ENCODE measurements at regions of chr6 and their contacts with region 1.

Region 1: DNA sequence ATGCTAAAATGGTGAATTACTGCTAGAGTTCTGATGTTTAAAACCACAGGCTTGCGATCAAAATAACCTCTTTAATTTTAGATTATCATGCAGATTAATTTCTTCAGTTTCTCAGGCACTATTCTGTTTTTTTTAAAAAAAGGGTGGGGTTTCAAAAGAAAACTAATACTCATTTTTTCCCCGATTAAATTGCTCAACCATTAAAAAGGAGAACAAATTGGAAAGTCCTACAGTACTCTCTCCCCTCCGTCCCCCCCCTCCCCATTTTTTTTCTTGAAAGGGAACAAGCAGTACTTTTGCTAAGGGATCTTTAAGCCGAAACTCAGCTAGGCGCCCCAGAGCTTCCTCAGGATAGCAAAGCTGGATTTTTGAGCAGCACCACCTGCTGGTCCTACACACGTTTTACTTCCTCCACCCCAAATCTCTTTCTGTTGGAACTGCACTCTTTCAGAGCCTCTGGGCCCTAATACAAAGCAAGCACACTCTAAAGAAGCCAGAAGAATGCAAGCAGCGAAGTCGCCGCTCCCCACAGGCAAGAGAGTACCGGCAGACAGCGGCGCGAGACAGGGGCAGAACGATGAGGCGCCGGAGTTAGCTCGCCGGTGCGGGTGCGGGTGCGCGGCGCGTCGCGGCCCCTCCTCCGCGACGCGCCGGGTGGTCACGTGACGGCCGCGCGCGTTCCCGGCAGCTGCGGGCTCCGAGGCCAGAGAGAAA is at the start of gene RNF146:
- DNase-seq: peak; percentile 73 to 84
- H3K4me3 ChIP-seq: peak within 1 kb of the TSS; percentile 99
- H3K4me3 Mint-ChIP-seq: peak within 1 kb of the TSS; percentile 94
- H3K27ac Mint-ChIP-seq: peak within 1 kb of the TSS; percentile 95
- H3K4me1 ChIP-seq: 0 out of 2 replicates have a peak, but pooled peaks cover 6% of the 10 kb centered on the region
- H3K4me1 Mint-ChIP-seq: peaks cover 9% of the 10 kb centered on the region
- H3K27me3 ChIP-seq: no peaks in the 10 kb centered on the region
- H3K27me3 Mint-ChIP-seq: no peaks in the 10 kb centered on the region
- CTCF ChIP-seq: peak; percentile 61 to 68
- total RNA-seq, gene RNF146: 31.3 and 35.1 TPM in 2 replicates

Region 2: GRCh38 chr6:125986300-125987025 is 1279.9 kb before region 1 on chr6 and contains the start of gene TRMT11:
- CTCF ChIA-PET with region 1: no interaction called
- POLR2A ChIA-PET with region 1: no interaction called
- intact Hi-C with region 1: loop called (anchors 1 kb)
- DNase-seq: peak; percentile 93 to 94
- H3K4me3 ChIP-seq: peak within 1 kb of the TSS; percentile 67
- H3K4me3 Mint-ChIP-seq: no peak within 1 kb of the TSS
- H3K27ac Mint-ChIP-seq: no peak within 1 kb of the TSS
- H3K4me1 ChIP-seq: peaks cover 27% of the 10 kb centered on the region
- H3K4me1 Mint-ChIP-seq: no peaks in the 10 kb centered on the region
- H3K27me3 ChIP-seq: no peaks in the 10 kb centered on the region
- H3K27me3 Mint-ChIP-seq: no peaks in the 10 kb centered on the region
- CTCF ChIP-seq: no peak
- total RNA-seq, gene TRMT11: 31.5 and 36.7 TPM in 2 replicates

Region 3: GRCh38 chr6:126804332-126805064 is 461.8 kb before region 1 on chr6:
- CTCF ChIA-PET with region 1: no interaction called
- POLR2A ChIA-PET with region 1: no interaction called
- intact Hi-C with region 1: loop called (anchors 10 kb)
- DNase-seq: peak; percentile 36 to 68
- H3K4me3 ChIP-seq: no peak overlapping the region
- H3K4me3 Mint-ChIP-seq: no peak overlapping the region
- H3K27ac Mint-ChIP-seq: no peak overlapping the region
- H3K4me1 ChIP-seq: peaks cover 36% of the 10 kb centered on the region
- H3K4me1 Mint-ChIP-seq: peaks cover 23% of the 10 kb centered on the region
- H3K27me3 ChIP-seq: no peaks in the 10 kb centered on the region
- H3K27me3 Mint-ChIP-seq: no peaks in the 10 kb centered on the region
- CTCF ChIP-seq: peak; percentile 66 to 71

Region 4: GRCh38 chr6:127120787-127121636 is 145.3 kb before region 1 on chr6:
- CTCF ChIA-PET with region 1: no interaction called
- POLR2A ChIA-PET with region 1: no interaction called
- intact Hi-C with region 1: no loop called
- DNase-seq: peak; percentile 81 to 87
- H3K4me3 ChIP-seq: no peak overlapping the region
- H3K4me3 Mint-ChIP-seq: no peak overlapping the region
- H3K27ac Mint-ChIP-seq: peak overlapping the region; percentile 22
- H3K4me1 ChIP-seq: 0 out of 2 replicates have a peak, but pooled peaks cover 2% of the 10 kb centered on the region
- H3K4me1 Mint-ChIP-seq: peaks cover 14% of the 10 kb centered on the region
- H3K27me3 ChIP-seq: no peaks in the 10 kb centered on the region
- H3K27me3 Mint-ChIP-seq: no peaks in the 10 kb centered on the region
- CTCF ChIP-seq: peak; percentile 83 to 88

Region 5: GRCh38 chr6:127186889-127187288 is 79.4 kb before region 1 on chr6:
- CTCF ChIA-PET with region 1: interaction called, 17 read pairs
- POLR2A ChIA-PET with region 1: no interaction called
- intact Hi-C with region 1: loop called (anchors 1 kb)
- DNase-seq: peak; percentile 48 to 69
- H3K4me3 ChIP-seq: no peak overlapping the region
- H3K4me3 Mint-ChIP-seq: no peak overlapping the region
- H3K27ac Mint-ChIP-seq: no peak overlapping the region
- H3K4me1 ChIP-seq: no peaks in the 10 kb centered on the region
- H3K4me1 Mint-ChIP-seq: no peaks in the 10 kb centered on the region
- H3K27me3 ChIP-seq: no peaks in the 10 kb centered on the region
- H3K27me3 Mint-ChIP-seq: peaks cover 3% of the 10 kb centered on the region
- CTCF ChIP-seq: peak; percentile 48 to 54

Region 6: GRCh38 chr6:127195833-127196232 is 70.5 kb before region 1 on chr6:
- CTCF ChIA-PET with region 1: interaction called, 11 read pairs
- POLR2A ChIA-PET with region 1: no interaction called
- intact Hi-C with region 1: loop called (anchors 2 kb)
- DNase-seq: no peak
- H3K4me3 ChIP-seq: no peak overlapping the region
- H3K4me3 Mint-ChIP-seq: no peak overlapping the region
- H3K27ac Mint-ChIP-seq: no peak overlapping the region
- H3K4me1 ChIP-seq: no peaks in the 10 kb centered on the region
- H3K4me1 Mint-ChIP-seq: peaks cover 6% of the 10 kb centered on the region
- H3K27me3 ChIP-seq: no peaks in the 10 kb centered on the region; the same call in 1 of the 2 replicates
- H3K27me3 Mint-ChIP-seq: peaks cover 4% of the 10 kb centered on the region
- CTCF ChIP-seq: no peak

Region 7: GRCh38 chr6:127342946-127343808 is 76.8 kb after region 1 on chr6 and contains the start of gene ECHDC1:
- CTCF ChIA-PET with region 1: interaction called, 5 read pairs
- POLR2A ChIA-PET with region 1: interaction called, 3 read pairs
- intact Hi-C with region 1: loop called (anchors 2 kb)
- DNase-seq: peak; percentile 59 to 65
- H3K4me3 ChIP-seq: peak within 1 kb of the TSS; percentile 58
- H3K4me3 Mint-ChIP-seq: no peak within 1 kb of the TSS
- H3K27ac Mint-ChIP-seq: no peak within 1 kb of the TSS
- H3K4me1 ChIP-seq: peaks cover 46% of the 10 kb centered on the region
- H3K4me1 Mint-ChIP-seq: peaks cover 14% of the 10 kb centered on the region
- H3K27me3 ChIP-seq: no peaks in the 10 kb centered on the region
- H3K27me3 Mint-ChIP-seq: no peaks in the 10 kb centered on the region
- CTCF ChIP-seq: no peak
- total RNA-seq, gene ECHDC1: 72.7 and 77.5 TPM in 2 replicates

Region 8: DNA sequence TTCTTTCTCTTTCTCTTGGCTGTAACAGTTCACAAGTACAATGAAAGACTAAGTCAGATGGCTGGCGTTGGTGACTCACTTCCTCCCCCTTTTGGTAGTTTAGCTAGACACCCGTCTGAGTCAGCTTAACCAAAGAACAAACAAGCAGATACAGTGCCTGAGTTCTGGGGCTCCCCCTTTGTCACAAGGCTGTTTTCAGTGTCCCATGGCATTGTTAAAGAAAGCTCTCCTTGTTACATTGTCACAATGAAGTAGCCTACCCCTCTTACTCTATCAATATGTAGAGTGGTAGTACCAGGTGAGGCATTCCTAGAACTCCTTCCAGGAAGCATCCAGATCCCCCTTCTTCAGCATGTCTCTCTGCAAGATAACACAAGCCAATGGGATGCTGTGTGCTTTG is 154.2 kb after region 1 on chr6:
- CTCF ChIA-PET with region 1: interaction called, 12 read pairs
- POLR2A ChIA-PET with region 1: interaction called, 4 read pairs
- intact Hi-C with region 1: no loop called
- DNase-seq: peak; percentile 49 to 62
- H3K4me3 ChIP-seq: no peak overlapping the region
- H3K4me3 Mint-ChIP-seq: no peak overlapping the region
- H3K27ac Mint-ChIP-seq: no peak overlapping the region
- H3K4me1 ChIP-seq: no peaks in the 10 kb centered on the region
- H3K4me1 Mint-ChIP-seq: no peaks in the 10 kb centered on the region
- H3K27me3 ChIP-seq: no peaks in the 10 kb centered on the region
- H3K27me3 Mint-ChIP-seq: no peaks in the 10 kb centered on the region
- CTCF ChIP-seq: peak; percentile 41 to 66

Measured in Caco-2 (cell line).